ENCODE measurements at regions of chr11 and their contacts with region 1.

Region 1: GRCh38 chr11:112555491-112556364 is 295.1 kb upstream of the PLET1 start:
- DNase-seq: peak; percentile 17 to 94
- H3K4me3 ChIP-seq: no peak overlapping the region
- H3K27ac ChIP-seq: no peak overlapping the region
- H3K4me1 ChIP-seq: no peaks in the 10 kb centered on the region; a peak in 1 of 7 replicates
- H3K27me3 ChIP-seq: no peaks in the 10 kb centered on the region
- CTCF ChIP-seq: peak; percentile 85 to 94 (median 89)
- EP300 ChIP-seq: no peak
- POLR2A ChIP-seq: no peak
- RAD21 ChIP-seq: peak; percentile 80 to 82

Region 2: DNA sequence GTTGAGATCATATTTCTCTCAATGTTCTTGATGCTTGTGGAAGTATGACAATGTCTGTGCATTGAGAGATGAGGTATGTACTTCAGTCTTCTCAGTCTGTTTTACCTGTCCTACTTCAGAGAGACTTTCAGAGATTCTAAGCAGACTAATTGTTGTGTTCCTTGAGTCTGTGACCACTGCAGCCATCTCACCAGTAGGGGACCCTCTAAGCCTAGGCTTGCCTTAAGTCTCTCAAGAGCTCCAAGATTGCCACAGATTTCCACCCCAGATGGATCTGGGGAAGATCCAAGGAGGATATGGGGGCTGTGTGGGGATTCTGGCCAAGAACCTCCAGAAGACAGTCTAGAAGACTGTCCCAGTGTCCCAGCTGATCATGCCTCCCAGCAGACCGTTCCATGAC is 115.2 kb before region 1 on chr11:
- CTCF ChIA-PET with region 1: interaction called, 42 read pairs
- POLR2A ChIA-PET with region 1: no interaction called
- DNase-seq: peak in 1 of 2 experiments; percentile 29
- H3K4me3 ChIP-seq: no peak overlapping the region
- H3K27ac ChIP-seq: no peak overlapping the region
- H3K4me1 ChIP-seq: no peaks in the 10 kb centered on the region
- H3K27me3 ChIP-seq: peaks cover 0 to 1% (median 0%) of the 10 kb centered on the region in 4 experiments; a peak in 2 of 7 replicates
- CTCF ChIP-seq: peak; percentile 40 to 93 (median 86)
- EP300 ChIP-seq: no peak
- POLR2A ChIP-seq: no peak
- RAD21 ChIP-seq: peak; percentile 96 to 99

Region 3: GRCh38 chr11:112537846-112538330 is 17.8 kb before region 1 on chr11:
- CTCF ChIA-PET with region 1: interaction called, 28 read pairs
- POLR2A ChIA-PET with region 1: no interaction called
- DNase-seq: no peak
- H3K4me3 ChIP-seq: no peak overlapping the region
- H3K27ac ChIP-seq: no peak overlapping the region
- H3K4me1 ChIP-seq: no peaks in the 10 kb centered on the region; a peak in 1 of 7 replicates
- H3K27me3 ChIP-seq: no peaks in the 10 kb centered on the region; a peak in 1 of 7 replicates
- CTCF ChIP-seq: no peak
- EP300 ChIP-seq: no peak
- POLR2A ChIP-seq: no peak
- RAD21 ChIP-seq: no peak

Region 4: DNA sequence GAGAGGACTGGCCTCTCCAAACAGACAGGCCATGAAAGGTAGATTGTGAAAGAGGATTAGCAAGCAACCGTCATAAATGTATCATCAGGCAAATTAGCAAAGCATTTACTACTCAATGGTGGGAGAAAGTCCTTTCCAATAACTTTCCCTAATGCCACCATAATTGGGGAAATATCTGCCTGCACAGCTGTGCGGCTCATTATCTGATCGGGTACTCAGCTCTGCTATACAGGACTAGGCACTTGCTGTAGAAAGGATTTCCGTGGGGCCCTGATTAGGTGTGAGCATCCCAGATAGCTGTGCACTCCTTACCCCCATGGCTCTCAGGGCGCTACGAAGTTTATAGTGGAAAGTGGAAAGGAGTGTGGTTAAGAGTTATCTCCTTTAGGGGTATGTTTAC is 14.6 kb after region 1 on chr11:
- CTCF ChIA-PET with region 1: interaction called, 37 read pairs
- POLR2A ChIA-PET with region 1: no interaction called
- DNase-seq: no peak
- H3K4me3 ChIP-seq: no peak overlapping the region
- H3K27ac ChIP-seq: no peak overlapping the region
- H3K4me1 ChIP-seq: no peaks in the 10 kb centered on the region
- H3K27me3 ChIP-seq: no peaks in the 10 kb centered on the region
- CTCF ChIP-seq: no peak
- EP300 ChIP-seq: no peak
- POLR2A ChIP-seq: no peak
- RAD21 ChIP-seq: no peak

Region 5: DNA sequence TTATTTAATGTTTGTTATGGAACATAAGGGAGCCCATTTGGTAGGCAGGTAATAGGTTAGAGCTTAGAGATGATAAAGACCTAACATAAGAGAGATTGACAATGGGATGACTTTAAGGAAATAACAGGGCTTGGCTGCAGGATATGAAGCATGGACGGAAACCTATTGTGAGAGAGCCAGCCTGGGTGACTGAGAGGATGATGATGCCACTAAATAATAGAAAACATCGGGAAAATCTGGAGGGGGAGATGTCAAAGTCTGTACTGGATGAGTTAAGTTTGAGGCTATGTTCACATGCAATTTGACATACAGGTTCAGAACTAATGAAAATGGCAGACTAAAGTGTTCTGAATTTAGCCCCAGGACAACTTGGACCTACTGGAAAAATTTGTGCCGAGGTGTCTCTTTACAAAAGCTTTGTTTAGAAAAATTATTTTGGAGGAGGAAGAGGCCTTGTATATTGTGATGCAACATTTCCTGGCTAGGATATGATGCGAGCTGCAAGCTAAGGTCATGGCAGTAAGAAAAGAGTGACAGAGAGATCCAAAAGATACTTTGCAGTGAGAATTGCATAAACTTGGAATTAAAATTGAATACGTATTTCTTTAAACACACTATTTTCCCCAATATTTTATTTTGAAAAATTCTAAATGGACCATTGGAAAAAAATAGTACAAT is 44.3 kb after region 1 on chr11:
- CTCF ChIA-PET with region 1: no interaction called
- POLR2A ChIA-PET with region 1: no interaction called
- DNase-seq: no peak
- H3K4me3 ChIP-seq: no peak overlapping the region
- H3K27ac ChIP-seq: no peak overlapping the region
- H3K4me1 ChIP-seq: peaks cover 0 to 8% (median 5%) of the 10 kb centered on the region in 4 experiments; a peak in 4 of 7 replicates
- H3K27me3 ChIP-seq: no peaks in the 10 kb centered on the region
- CTCF ChIP-seq: no peak
- EP300 ChIP-seq: no peak
- POLR2A ChIP-seq: no peak
- RAD21 ChIP-seq: no peak

Region 6: DNA sequence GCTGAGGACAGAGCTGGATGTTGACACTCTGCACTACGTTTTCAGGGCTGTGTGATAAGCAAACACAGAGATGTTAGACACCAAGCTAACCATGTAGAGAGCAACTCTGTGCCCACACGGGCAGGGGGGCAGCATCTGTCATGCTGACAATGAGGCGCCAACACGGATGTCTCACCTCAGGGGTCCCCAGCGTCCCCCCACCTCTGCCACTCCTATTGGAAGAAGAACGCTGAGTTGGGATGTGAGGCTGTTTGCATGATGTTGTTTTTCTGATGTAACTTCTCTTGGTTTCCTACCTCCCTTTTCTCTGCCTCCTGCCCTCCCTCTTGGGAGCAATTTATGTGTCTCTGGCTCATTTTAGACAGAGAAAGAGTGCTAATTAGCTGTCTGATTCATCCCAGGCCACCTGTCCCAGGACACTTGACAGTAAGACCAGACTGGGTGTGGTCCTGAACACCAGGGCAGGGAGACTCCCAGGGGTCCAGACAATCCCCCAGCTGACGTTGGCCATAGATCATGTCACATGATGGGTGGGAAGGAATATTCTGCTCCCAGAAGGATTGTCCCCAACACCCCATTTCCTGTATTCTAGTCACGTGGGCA is 316.3 kb after region 1 on chr11:
- CTCF ChIA-PET with region 1: no interaction called
- POLR2A ChIA-PET with region 1: no interaction called
- DNase-seq: no peak
- H3K4me3 ChIP-seq: no peak overlapping the region
- H3K27ac ChIP-seq: no peak overlapping the region
- H3K4me1 ChIP-seq: no peaks in the 10 kb centered on the region
- H3K27me3 ChIP-seq: no peaks in the 10 kb centered on the region
- CTCF ChIP-seq: no peak
- EP300 ChIP-seq: no peak
- POLR2A ChIP-seq: no peak
- RAD21 ChIP-seq: no peak

Measured in H1 (cell line).